ENCODE measurements at regions of chr7 and their contacts with region 1.

Region 1: GRCh38 chr7:2209146-2209960 is 23.4 kb downstream of the MAD1L1 start:
- DNase-seq: peak; percentile 32
- ATAC-seq: peak; percentile 94
- H3K4me3 ChIP-seq: no peak overlapping the region
- H3K27ac ChIP-seq: peak overlapping the region; percentile 45
- H3K4me1 ChIP-seq: peaks cover 11% of the 10 kb centered on the region
- H3K27me3 ChIP-seq: no peaks in the 10 kb centered on the region
- CTCF ChIP-seq: peak; percentile 74 to 88 (median 88)
- EP300 ChIP-seq: peak in 1 of 2 experiments; percentile 53; a peak in 1 of 4 replicates
- POLR2A ChIP-seq: 0 out of 2 replicates have a peak, but pooled peaks have one; percentile 10
- RAD21 ChIP-seq: peak; percentile 84

Region 2: GRCh38 chr7:1664711-1665548 is 544.4 kb before region 1 on chr7:
- CTCF ChIA-PET with region 1: interaction called, 3 read pairs
- POLR2A ChIA-PET with region 1: no interaction called
- RAD21 ChIA-PET with region 1: interaction called, 3 read pairs
- SMC1A ChIA-PET with region 1: no interaction called
- in situ Hi-C with region 1: loop called (anchors 10 kb)
- intact Hi-C with region 1: loop called (anchors 5 kb)
- DNase-seq: no peak
- ATAC-seq: peak; percentile 38; the same call in 2 of the 3 replicates
- H3K4me3 ChIP-seq: peak overlapping the region; percentile 27; the same call in 1 of the 2 replicates
- H3K27ac ChIP-seq: no peak overlapping the region
- H3K4me1 ChIP-seq: no peaks in the 10 kb centered on the region
- H3K27me3 ChIP-seq: peaks cover 1 to 6% of the 10 kb centered on the region in 2 experiments; a peak in 2 of 4 replicates
- CTCF ChIP-seq: peak; percentile 54 to 64 (median 63)
- EP300 ChIP-seq: no peak
- POLR2A ChIP-seq: no peak
- RAD21 ChIP-seq: peak; percentile 71

Region 3: DNA sequence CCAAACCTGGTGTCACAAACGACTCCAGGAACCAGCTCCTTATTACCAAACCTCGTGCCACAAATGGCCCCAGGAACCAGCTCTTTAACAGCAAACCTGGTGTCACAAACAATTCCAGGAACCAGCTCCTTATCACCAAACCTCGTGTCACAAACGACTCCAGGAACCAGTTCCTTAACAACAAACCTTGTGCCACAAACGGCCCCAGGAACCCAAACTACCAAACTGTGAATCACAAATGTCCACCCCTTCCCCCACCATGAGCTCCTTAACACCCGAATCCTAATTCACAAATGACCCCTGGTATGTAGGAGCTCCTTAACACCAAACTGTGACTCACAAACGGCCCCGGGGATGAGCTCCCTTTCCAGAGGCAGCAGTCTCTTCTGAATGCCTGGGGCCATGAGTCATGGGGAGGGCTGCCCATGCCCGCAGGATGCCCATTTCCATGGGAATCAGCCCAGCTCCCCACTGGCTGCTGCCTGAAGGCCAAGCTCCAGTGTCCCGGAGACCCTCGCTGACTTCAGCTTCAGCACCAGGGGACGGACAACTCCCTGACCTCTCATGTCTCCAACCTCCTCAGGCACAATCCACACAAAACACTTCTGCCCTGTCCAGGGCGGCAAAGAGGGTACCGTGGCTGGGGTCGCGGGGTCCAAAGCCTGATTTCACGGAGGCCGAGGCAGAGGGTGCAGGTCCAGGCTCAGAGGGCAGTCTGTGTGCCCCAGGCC is 326.2 kb before region 1 on chr7:
- CTCF ChIA-PET with region 1: no interaction called
- POLR2A ChIA-PET with region 1: no interaction called
- RAD21 ChIA-PET with region 1: no interaction called
- SMC1A ChIA-PET with region 1: no interaction called
- in situ Hi-C with region 1: no loop called
- intact Hi-C with region 1: no loop called
- DNase-seq: no peak
- ATAC-seq: no peak
- H3K4me3 ChIP-seq: no peak overlapping the region
- H3K27ac ChIP-seq: no peak overlapping the region
- H3K4me1 ChIP-seq: no peaks in the 10 kb centered on the region
- H3K27me3 ChIP-seq: no peaks in the 10 kb centered on the region
- CTCF ChIP-seq: no peak
- EP300 ChIP-seq: no peak
- POLR2A ChIP-seq: no peak
- RAD21 ChIP-seq: no peak

Region 4: GRCh38 chr7:2104107-2104710 is 105.1 kb before region 1 on chr7:
- CTCF ChIA-PET with region 1: interaction called, 22 read pairs
- POLR2A ChIA-PET with region 1: interaction called, 5 read pairs
- RAD21 ChIA-PET with region 1: interaction called, 18 read pairs
- SMC1A ChIA-PET with region 1: interaction called, 14 read pairs
- in situ Hi-C with region 1: no loop called
- intact Hi-C with region 1: no loop called
- DNase-seq: no peak
- ATAC-seq: peak; percentile 48
- H3K4me3 ChIP-seq: no peak overlapping the region
- H3K27ac ChIP-seq: no peak overlapping the region
- H3K4me1 ChIP-seq: peaks cover 15% of the 10 kb centered on the region
- H3K27me3 ChIP-seq: no peaks in the 10 kb centered on the region
- CTCF ChIP-seq: peak; percentile 15 to 47 (median 37); a peak in 4 of 6 replicates
- EP300 ChIP-seq: no peak
- POLR2A ChIP-seq: no peak
- RAD21 ChIP-seq: no peak

Region 5: DNA sequence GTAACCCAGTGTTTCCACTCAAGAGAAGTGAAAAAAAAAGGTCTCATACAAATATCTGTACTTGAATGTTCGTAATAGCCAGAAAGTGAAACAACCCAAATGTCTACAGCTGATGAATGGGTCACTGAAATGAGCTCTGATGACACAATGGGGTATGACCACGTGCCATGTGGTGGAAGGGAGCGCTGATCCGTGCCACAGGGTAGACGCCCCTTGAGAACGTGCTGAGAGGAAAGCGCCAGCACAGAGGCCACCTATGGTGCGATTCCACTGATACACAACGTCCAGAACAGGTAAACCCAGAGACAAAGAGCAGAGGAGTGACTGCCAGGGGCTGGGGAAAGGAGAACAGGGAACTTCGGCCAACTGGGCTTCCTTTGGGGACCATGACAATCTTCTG is 26.9 kb before region 1 on chr7:
- CTCF ChIA-PET with region 1: interaction called, 8 read pairs
- POLR2A ChIA-PET with region 1: interaction called, 3 read pairs
- RAD21 ChIA-PET with region 1: interaction called, 8 read pairs
- SMC1A ChIA-PET with region 1: interaction called, 11 read pairs
- in situ Hi-C with region 1: no loop called
- intact Hi-C with region 1: no loop called
- DNase-seq: peak; percentile 74
- ATAC-seq: peak; percentile 96
- H3K4me3 ChIP-seq: no peak overlapping the region
- H3K27ac ChIP-seq: peak overlapping the region; percentile 68
- H3K4me1 ChIP-seq: peaks cover 8% of the 10 kb centered on the region
- H3K27me3 ChIP-seq: no peaks in the 10 kb centered on the region
- CTCF ChIP-seq: no peak
- EP300 ChIP-seq: peak in 1 of 2 experiments; percentile 41; a peak in 1 of 4 replicates
- POLR2A ChIP-seq: no peak
- RAD21 ChIP-seq: no peak

Region 6: GRCh38 chr7:2354186-2354938 is 145.0 kb after region 1 on chr7 and contains the start of gene EIF3B:
- CTCF ChIA-PET with region 1: interaction called, 45 read pairs
- POLR2A ChIA-PET with region 1: no interaction called
- RAD21 ChIA-PET with region 1: interaction called, 23 read pairs
- SMC1A ChIA-PET with region 1: interaction called, 3 read pairs
- in situ Hi-C with region 1: no loop called
- intact Hi-C with region 1: no loop called
- DNase-seq: peak; percentile 89
- ATAC-seq: peak; percentile 91
- H3K4me3 ChIP-seq: peak within 1 kb of the TSS; percentile 93
- H3K27ac ChIP-seq: peak within 1 kb of the TSS; percentile 99
- H3K4me1 ChIP-seq: peaks cover 12% of the 10 kb centered on the region
- H3K27me3 ChIP-seq: no peaks in the 10 kb centered on the region
- CTCF ChIP-seq: no peak
- EP300 ChIP-seq: no peak
- POLR2A ChIP-seq: peak; percentile 97
- RAD21 ChIP-seq: no peak
- polyA plus RNA-seq, gene EIF3B: 17.6 to 52.4 TPM

Measured in GM12878 (cell line).